ENCODE measurements at regions of chr1 and their contacts with region 1.

Region 1: DNA sequence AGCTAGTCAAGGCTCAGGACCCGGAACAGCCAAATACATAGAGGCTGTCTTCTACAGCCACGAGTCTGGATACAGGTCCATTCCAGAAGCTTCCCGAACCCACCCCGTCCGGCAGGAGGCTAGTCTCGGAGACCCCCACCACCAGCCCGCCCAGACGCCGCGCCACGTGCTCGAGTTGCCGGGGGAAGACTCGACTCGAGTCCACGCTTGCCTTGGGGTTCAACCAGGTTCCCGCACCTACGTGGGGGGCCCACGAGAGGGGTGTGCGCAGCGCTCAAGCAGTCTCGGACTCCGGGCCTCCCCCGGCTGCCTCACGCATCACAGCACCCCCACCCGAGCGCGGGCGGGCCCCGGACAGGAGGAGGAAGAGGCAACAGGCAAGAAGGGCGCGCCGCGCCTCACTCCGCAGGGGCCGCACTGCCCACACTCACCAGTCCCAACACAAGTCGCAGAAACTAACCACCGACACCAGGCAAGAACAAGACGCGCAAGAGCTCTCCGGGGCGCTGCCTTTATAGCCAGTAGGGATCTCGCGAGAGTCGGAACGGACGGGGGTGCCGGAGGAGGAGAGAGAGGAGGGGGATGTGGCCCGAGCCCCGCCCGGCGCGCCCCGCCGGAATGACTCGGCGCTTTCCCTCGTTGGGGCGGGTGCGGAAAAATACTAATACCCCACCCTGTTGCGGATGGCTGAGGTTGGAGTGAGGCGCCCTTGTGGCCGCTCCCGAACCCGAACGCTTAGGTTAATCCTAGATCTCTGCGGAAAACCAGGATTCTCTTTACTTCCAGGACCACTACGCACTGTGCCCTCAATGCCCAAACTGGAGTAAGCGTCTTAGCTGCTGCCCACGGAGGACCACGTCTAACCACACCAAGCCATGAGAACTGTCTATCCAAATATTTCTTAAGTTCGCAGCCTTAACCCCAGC is at the start of gene PRDX1:
- DNase-seq: peak; percentile 97 to 99 (median 98)
- H3K4me3 ChIP-seq: peak within 1 kb of the TSS; percentile 69
- H3K27ac ChIP-seq: peak within 1 kb of the TSS; percentile 75 to 93
- H3K4me1 ChIP-seq: peaks cover 12% of the 10 kb centered on the region
- H3K27me3 ChIP-seq: no peaks in the 10 kb centered on the region
- CTCF ChIP-seq: peak in 2 of 3 donors; percentile 8 to 43
- EP300 ChIP-seq: no peak
- POLR2A ChIP-seq: peak; percentile 99
- total RNA-seq, gene PRDX1: 127 to 332 (median 250) TPM

Region 2: GRCh38 chr1:45569962-45570581 is 48.4 kb after region 1 on chr1:
- intact Hi-C with region 1: loop called in 1 of 4 experiments (anchors 5 kb)
- DNase-seq: peak; percentile 60 to 80 (median 70)
- H3K4me3 ChIP-seq: no peak overlapping the region
- H3K27ac ChIP-seq: no peak overlapping the region
- H3K4me1 ChIP-seq: no peaks in the 10 kb centered on the region
- H3K27me3 ChIP-seq: no peaks in the 10 kb centered on the region
- CTCF ChIP-seq: peak; percentile 84 to 89 (median 86)
- EP300 ChIP-seq: no peak
- POLR2A ChIP-seq: no peak

Region 3: GRCh38 chr1:45892068-45892785 is 370.6 kb after region 1 on chr1:
- intact Hi-C with region 1: no loop called
- DNase-seq: no peak
- H3K4me3 ChIP-seq: no peak overlapping the region
- H3K27ac ChIP-seq: peak overlapping the region; percentile 3 to 32
- H3K4me1 ChIP-seq: peaks cover 8% of the 10 kb centered on the region
- H3K27me3 ChIP-seq: no peaks in the 10 kb centered on the region
- CTCF ChIP-seq: no peak
- EP300 ChIP-seq: no peak
- POLR2A ChIP-seq: no peak

Measured in ovary (tissue), 10 donors.